Spleen (tissue), 13 donors: ENCODE measurements at regions of chr11 and their contacts with region 1.

Region 1: GRCh38 chr11:10653926-10654810 is 39.4 kb downstream of the IRAG1 start:
- DNase-seq: no peak
- H3K4me3 ChIP-seq: no peak overlapping the region
- H3K27ac ChIP-seq: peak overlapping the region in 6 of 8 donors; percentile 27 to 83 (median 68)
- H3K4me1 ChIP-seq: peaks cover 30 to 92% (median 67%) of the 10 kb centered on the region in 6 donors
- H3K27me3 ChIP-seq: no peaks in the 10 kb centered on the region
- CTCF ChIP-seq: peak; percentile 41 to 84 (median 77)
- POLR2A ChIP-seq: no peak

Region 2: GRCh38 chr11:10413268-10413667 is 240.9 kb before region 1 on chr11:
- intact Hi-C with region 1: loop called (anchors 5 kb)
- DNase-seq: peak; percentile 81
- H3K4me3 ChIP-seq: no peak overlapping the region
- H3K27ac ChIP-seq: peak overlapping the region in 1 of 8 donors; percentile 70
- H3K4me1 ChIP-seq: peaks cover 10 to 41% (median 23%) of the 10 kb centered on the region in 6 donors
- H3K27me3 ChIP-seq: no peaks in the 10 kb centered on the region
- CTCF ChIP-seq: peak in 9 of 11 experiments; percentile 31 to 59 (median 48)
- POLR2A ChIP-seq: no peak

Region 3: DNA sequence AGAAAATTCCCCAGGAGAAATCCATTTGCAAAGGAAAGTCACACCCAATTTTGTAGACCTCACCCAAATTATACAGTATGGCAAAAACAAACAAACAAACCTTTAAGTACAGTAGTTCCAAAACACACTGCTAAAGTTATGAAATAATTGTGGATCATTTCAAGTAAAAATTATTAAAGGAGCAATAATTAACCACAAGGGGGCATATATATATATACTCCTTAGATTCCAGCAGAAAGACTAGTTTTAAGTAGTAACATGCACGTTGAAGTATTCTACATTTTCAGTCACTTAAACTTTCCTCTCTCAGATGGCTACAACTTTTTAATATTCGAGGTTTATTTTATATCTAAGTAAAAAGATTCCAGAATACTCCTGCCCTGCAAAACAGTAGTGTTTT is 140.0 kb before region 1 on chr11:
- intact Hi-C with region 1: loop called (anchors 10 kb)
- DNase-seq: no peak
- H3K4me3 ChIP-seq: no peak overlapping the region
- H3K27ac ChIP-seq: peak overlapping the region in 2 of 8 donors; percentile 10 to 24
- H3K4me1 ChIP-seq: peaks cover 0 to 22% (median 0%) of the 10 kb centered on the region in 6 donors
- H3K27me3 ChIP-seq: no peaks in the 10 kb centered on the region
- CTCF ChIP-seq: peak in 7 of 11 experiments; percentile 14 to 55 (median 41)
- POLR2A ChIP-seq: no peak

Region 4: GRCh38 chr11:10735481-10736475 is 81.6 kb after region 1 on chr11:
- intact Hi-C with region 1: loop called (anchors 5 kb)
- DNase-seq: peak; percentile 99
- H3K4me3 ChIP-seq: peak overlapping the region in 4 of 8 donors; percentile 3 to 46 (median 14)
- H3K27ac ChIP-seq: peak overlapping the region; percentile 28 to 80 (median 72)
- H3K4me1 ChIP-seq: peaks cover 0 to 16% (median 12%) of the 10 kb centered on the region in 6 donors
- H3K27me3 ChIP-seq: no peaks in the 10 kb centered on the region
- CTCF ChIP-seq: peak; percentile 96 to 99 (median 99)
- POLR2A ChIP-seq: no peak